ENCODE measurements at regions of chr5 and their contacts with region 1.

Region 1: GRCh38 chr5:63963080-63963735 is 963 bp upstream of the HTR1A start:
- DNase-seq: peak in 1 of 2 donors; percentile 48
- ATAC-seq: no peak
- H3K4me3 ChIP-seq: no peak overlapping the region
- H3K27ac ChIP-seq: no peak overlapping the region
- H3K4me1 ChIP-seq: peaks cover 0 to 3% (median 0%) of the 10 kb centered on the region in 9 donors
- H3K27me3 ChIP-seq: peaks cover 13 to 49% (median 48%) of the 10 kb centered on the region in 7 donors
- CTCF ChIP-seq: peak in 8 of 9 donors; percentile 15 to 70 (median 58)

Region 2: DNA sequence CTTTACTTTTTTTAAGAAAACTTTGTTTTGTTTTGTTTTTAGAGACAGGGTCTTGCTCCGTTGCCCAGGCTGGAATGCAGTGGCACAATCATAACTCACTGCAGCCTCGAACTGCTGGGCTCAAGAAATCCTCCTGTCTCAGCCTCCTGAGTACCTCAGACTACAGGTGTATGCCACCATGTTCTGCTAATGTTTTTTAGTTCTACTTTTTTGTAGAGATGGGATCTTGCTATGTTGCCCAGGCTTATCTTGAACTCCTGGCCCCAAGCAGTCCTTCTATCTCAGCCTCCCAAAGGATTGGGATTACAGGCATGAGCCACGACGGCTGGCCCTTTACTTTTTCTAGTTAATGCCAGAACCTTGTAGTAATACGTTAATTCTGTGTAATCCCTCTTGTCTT is 1514.7 kb before region 1 on chr5:
- intact Hi-C with region 1: loop called in 1 of 10 experiments (anchors 10 kb)
- DNase-seq: no peak
- ATAC-seq: no peak
- H3K4me3 ChIP-seq: no peak overlapping the region
- H3K27ac ChIP-seq: no peak overlapping the region
- H3K4me1 ChIP-seq: no peaks in the 10 kb centered on the region
- H3K27me3 ChIP-seq: no peaks in the 10 kb centered on the region
- CTCF ChIP-seq: no peak

Region 3: DNA sequence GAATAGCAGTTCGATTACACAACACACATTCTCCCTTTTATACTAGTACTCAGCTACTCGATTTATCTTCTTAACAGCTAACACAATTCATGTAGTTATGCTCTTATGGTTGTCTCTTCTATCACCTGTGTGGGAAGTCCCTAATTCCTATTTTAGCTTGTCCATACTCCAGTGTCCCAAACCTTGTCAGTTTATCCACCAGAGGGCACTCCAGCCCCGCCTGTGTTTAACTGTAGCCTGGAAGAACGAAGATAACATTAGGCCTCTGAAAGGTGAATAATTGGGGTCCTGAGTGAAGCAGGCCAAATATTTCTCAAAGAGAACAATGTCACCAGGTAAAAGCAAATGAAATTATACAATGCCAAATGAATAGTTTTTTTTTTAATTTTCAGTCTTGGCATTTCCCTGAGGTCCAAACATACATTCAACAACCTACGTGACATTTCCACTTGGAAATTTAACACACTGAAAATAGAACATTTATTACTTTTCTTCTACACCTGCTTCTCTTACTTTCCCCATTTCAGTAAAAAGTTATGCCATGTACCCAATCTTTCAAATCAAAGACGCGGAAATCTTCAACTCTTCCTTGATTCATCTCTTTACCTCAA is 561.7 kb before region 1 on chr5:
- intact Hi-C with region 1: loop called in 9 of 10 experiments (anchors 2 to 10 kb)
- DNase-seq: peak; percentile 24 to 54
- ATAC-seq: peak in 3 of 8 donors; percentile 38 to 66 (median 59)
- H3K4me3 ChIP-seq: no peak overlapping the region
- H3K27ac ChIP-seq: no peak overlapping the region
- H3K4me1 ChIP-seq: no peaks in the 10 kb centered on the region
- H3K27me3 ChIP-seq: peaks cover 0 to 16% (median 0%) of the 10 kb centered on the region in 7 donors
- CTCF ChIP-seq: peak; percentile 40 to 84 (median 74)

Measured in heart right ventricle (tissue), 16 donors.